ENCODE measurements at regions of chr13 and their contacts with region 1.

Region 1: GRCh38 chr13:36420437-36420891 is 11.8 kb upstream of the CCNA1 start:
- DNase-seq: peak; percentile 84
- H3K4me3 ChIP-seq: no peak overlapping the region
- H3K27ac ChIP-seq: no peak overlapping the region
- H3K4me1 ChIP-seq: peaks cover 32% of the 10 kb centered on the region
- H3K27me3 ChIP-seq: no peaks in the 10 kb centered on the region
- CTCF ChIP-seq: peak; percentile 86 to 91
- POLR2A ChIP-seq: no peak

Region 2: DNA sequence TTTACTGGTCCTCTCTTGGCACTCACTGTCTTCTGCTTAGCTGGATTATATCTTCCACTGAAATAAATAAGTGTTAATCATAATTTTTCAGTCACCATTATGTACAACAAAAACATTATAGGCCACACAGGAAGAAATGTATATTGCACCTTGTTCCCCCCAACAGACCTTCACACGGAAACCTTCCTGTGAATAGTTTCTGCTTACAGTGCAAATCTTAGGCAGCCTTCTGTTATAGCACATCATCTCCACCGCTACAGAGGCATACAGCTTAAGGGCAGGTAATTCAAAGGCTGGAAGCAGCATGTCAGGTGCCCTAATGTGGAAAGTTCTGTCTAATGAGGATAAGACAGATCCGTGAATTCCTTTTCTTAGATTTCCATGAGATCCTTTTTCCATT is 189.2 kb before region 1 on chr13:
- CTCF ChIA-PET with region 1: no interaction called
- POLR2A ChIA-PET with region 1: no interaction called
- dilution Hi-C with region 1: no loop called
- intact Hi-C with region 1: no loop called
- DNase-seq: no peak
- H3K4me3 ChIP-seq: no peak overlapping the region
- H3K27ac ChIP-seq: no peak overlapping the region
- H3K4me1 ChIP-seq: no peaks in the 10 kb centered on the region
- H3K27me3 ChIP-seq: no peaks in the 10 kb centered on the region
- CTCF ChIP-seq: no peak
- POLR2A ChIP-seq: no peak

Region 3: GRCh38 chr13:37068962-37069361 is 648.5 kb after region 1 on chr13:
- CTCF ChIA-PET with region 1: interaction called, 4 read pairs
- POLR2A ChIA-PET with region 1: no interaction called
- dilution Hi-C with region 1: no loop called
- intact Hi-C with region 1: loop called (anchors 1 kb)
- DNase-seq: peak; percentile 15
- H3K4me3 ChIP-seq: no peak overlapping the region
- H3K27ac ChIP-seq: no peak overlapping the region
- H3K4me1 ChIP-seq: no peaks in the 10 kb centered on the region
- H3K27me3 ChIP-seq: no peaks in the 10 kb centered on the region
- CTCF ChIP-seq: peak; percentile 15 to 25
- POLR2A ChIP-seq: no peak